Activated CD4-positive, alpha-beta T cell treated with anti-CD3 and anti-CD28 coated beads for 36 hours (primary cell): ENCODE measurements at regions of chr14 and their contacts with region 1.

Region 1: DNA sequence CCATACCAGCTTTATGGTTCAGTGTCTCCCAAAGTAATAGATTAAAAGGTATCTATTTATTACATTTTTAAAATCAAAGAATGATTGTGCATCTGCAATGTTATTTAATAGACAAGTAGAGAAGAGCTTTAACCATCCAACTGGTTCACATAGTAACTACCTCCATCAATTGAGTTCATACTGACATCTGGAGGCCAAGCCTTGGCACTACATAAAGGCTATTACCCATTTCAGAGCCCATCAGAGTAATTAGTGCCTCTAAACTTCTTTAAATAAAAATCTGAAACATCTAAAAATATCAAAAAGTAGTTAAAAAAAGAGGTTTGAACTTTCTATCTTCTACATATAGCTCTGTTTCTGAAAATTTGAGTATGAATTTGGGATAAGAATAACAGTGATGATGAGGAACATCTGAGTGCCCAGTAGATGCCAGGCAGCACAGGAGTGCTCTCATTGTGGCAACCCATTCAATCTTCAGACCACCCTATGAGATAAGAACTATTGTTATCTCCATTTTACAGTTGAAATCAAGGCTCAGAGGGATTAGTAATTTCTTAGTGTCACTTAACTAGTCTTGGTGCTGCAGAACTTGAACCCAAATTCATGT is 132.9 kb upstream of the DAAM1 start:
- DNase-seq: peak; percentile 38
- ATAC-seq: peak; percentile 61
- H3K4me3 Mint-ChIP-seq: no peak overlapping the region
- H3K27ac Mint-ChIP-seq: no peak overlapping the region
- H3K4me1 Mint-ChIP-seq: no peaks in the 10 kb centered on the region
- H3K27me3 Mint-ChIP-seq: peaks cover 2% of the 10 kb centered on the region

Region 2: DNA sequence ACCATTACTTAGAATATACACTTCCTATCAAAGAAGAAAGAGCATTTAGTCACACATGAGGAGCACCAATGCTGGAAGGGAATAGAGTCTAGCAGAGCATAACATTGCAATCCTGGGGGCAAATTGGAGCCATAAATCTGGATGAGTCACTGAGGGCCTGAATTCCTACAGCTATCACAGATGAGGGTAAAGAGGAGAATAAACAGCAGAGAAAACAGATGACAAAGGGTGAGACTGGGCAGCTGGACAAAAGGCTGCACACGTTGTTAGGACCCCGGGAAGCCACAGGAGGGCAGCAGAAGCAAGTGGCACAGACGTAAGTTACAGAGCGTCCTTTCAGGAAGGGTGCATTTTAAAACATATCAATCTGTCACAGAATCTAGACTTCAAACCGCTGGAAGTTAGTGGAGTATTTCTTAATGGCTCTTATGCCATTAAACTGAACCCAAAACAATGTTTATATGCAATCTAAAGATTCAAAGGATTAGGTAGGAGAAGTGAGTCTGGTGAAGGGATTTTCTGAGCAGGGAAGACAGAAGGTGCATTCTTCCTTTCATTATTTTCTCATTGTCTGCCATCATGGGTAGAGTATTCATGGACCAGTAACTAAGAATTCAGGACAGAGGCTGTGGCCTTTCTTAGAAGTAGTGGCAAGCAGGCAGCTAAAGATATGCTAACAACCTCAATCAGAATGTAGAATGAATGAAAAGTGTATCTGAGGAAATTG is 26.9 kb before region 1 on chr14:
- CTCF ChIA-PET with region 1: no interaction called
- POLR2A ChIA-PET with region 1: no interaction called
- intact Hi-C with region 1: loop called in 1 of 2 experiments (anchors 1 kb)
- DNase-seq: peak; percentile 66
- ATAC-seq: peak; percentile 79
- H3K4me3 Mint-ChIP-seq: no peak overlapping the region
- H3K27ac Mint-ChIP-seq: no peak overlapping the region
- H3K4me1 Mint-ChIP-seq: peaks cover 2% of the 10 kb centered on the region
- H3K27me3 Mint-ChIP-seq: peaks cover 12% of the 10 kb centered on the region

Region 3: GRCh38 chr14:59038743-59039142 is 16.8 kb before region 1 on chr14:
- CTCF ChIA-PET with region 1: no interaction called
- POLR2A ChIA-PET with region 1: no interaction called
- intact Hi-C with region 1: no loop called
- DNase-seq: no peak
- ATAC-seq: no peak
- H3K4me3 Mint-ChIP-seq: no peak overlapping the region
- H3K27ac Mint-ChIP-seq: no peak overlapping the region
- H3K4me1 Mint-ChIP-seq: no peaks in the 10 kb centered on the region
- H3K27me3 Mint-ChIP-seq: no peaks in the 10 kb centered on the region

Region 4: GRCh38 chr14:59294662-59294992 is 239.1 kb after region 1 on chr14:
- CTCF ChIA-PET with region 1: no interaction called
- POLR2A ChIA-PET with region 1: no interaction called
- intact Hi-C with region 1: no loop called
- DNase-seq: no peak
- ATAC-seq: no peak
- H3K4me3 Mint-ChIP-seq: no peak overlapping the region
- H3K27ac Mint-ChIP-seq: no peak overlapping the region
- H3K4me1 Mint-ChIP-seq: peaks cover 16% of the 10 kb centered on the region
- H3K27me3 Mint-ChIP-seq: no peaks in the 10 kb centered on the region

Region 5: GRCh38 chr14:59664741-59665140 is 609.2 kb after region 1 on chr14:
- CTCF ChIA-PET with region 1: no interaction called
- POLR2A ChIA-PET with region 1: no interaction called
- intact Hi-C with region 1: no loop called
- DNase-seq: no peak
- ATAC-seq: no peak
- H3K4me3 Mint-ChIP-seq: no peak overlapping the region
- H3K27ac Mint-ChIP-seq: no peak overlapping the region
- H3K4me1 Mint-ChIP-seq: no peaks in the 10 kb centered on the region
- H3K27me3 Mint-ChIP-seq: no peaks in the 10 kb centered on the region